HepG2 (cell line): ENCODE measurements at regions of chr11 and their contacts with region 1.

Region 1: DNA sequence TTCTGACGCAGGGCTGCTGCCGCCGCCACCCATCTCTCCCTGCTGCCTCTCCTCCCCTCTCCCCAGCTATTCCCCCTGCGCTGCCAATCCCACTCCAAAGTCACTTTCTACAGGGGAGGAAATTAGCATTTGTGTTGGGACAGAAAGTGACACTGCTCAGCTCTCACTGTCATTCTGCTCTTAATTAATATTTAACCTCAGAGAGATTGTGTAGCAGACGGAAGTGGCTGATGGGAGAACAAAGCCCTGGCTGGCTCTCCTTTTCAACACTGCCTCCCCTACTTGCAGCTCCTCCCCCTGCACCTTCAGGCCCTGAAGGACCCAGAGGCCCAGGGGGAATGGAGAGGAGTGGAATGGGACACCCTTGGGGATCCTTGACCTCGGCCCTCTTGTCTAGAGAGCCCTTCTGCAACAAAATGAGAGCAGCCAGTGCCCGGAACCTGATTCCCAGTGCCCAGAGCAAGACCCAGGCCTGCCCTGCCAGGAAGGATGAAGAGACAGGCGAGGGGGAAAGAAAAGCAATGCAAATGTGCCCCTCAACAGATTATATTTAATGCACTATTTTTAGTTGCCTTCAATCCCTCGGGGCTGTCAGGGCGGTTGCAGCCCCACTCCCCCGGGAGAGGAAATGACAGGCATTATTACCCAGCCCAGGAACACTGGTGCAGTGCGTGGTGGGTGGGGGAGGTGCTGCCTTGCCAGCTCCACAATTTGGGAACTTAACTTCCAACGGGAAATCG is 14.6 kb upstream of the NRGN start:
- DNase-seq: peak; percentile 62
- ATAC-seq: peak; percentile 94
- H3K4me3 ChIP-seq: peak overlapping the region; percentile 14 to 57 (median 18); a peak in 4 of 6 replicates
- H3K27ac ChIP-seq: no peak overlapping the region
- H3K4me1 ChIP-seq: peaks cover 22% of the 10 kb centered on the region
- H3K27me3 ChIP-seq: peaks cover 3 to 30% of the 10 kb centered on the region in 2 experiments; a peak in 4 of 5 replicates
- CTCF ChIP-seq: no peak
- EP300 ChIP-seq: no peak
- POLR2A ChIP-seq: no peak
- RAD21 ChIP-seq: no peak

Region 2: DNA sequence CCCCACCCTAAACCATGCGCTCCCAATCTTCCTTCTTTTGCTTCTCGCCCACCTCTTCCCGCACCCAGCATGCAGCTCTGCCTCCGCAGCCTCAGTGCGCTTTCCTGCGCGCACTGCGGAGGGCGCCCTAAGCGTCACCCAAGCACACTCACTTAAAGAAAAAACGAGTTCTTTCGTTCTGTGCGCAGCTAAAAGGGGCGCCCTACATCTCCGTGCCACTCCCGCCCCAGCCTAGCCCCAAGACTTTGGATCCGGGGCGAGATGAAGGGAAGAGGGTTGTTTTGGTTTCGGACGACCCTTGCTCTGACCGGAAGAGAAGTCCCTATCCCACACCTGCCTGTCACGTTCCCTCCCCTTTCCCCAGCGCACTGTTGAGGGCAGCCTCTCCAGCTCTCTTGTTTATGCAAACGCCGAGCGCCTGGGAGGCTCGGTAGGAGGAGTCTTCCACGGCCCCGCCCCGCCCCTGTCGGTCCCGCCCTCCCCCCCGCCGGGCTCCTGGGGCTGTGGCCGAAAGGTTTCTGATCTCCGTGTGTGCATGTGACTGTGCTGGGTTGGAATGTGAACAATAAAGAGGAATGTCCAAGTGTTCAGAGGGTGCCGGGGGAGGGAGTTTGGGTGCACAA is 21.6 kb after region 1 on chr11:
- CTCF ChIA-PET with region 1: no interaction called
- POLR2A ChIA-PET with region 1: interaction called, 10 read pairs
- in situ Hi-C with region 1: no loop called
- intact Hi-C with region 1: no loop called
- DNase-seq: peak; percentile 89
- ATAC-seq: peak; percentile 90
- H3K4me3 ChIP-seq: peak overlapping the region; percentile 70 to 86 (median 78)
- H3K27ac ChIP-seq: peak overlapping the region; percentile 51
- H3K4me1 ChIP-seq: peaks cover 45% of the 10 kb centered on the region
- H3K27me3 ChIP-seq: peaks cover 0 to 71% of the 10 kb centered on the region in 2 experiments; a peak in 3 of 5 replicates
- CTCF ChIP-seq: peak; percentile 81
- EP300 ChIP-seq: no peak
- POLR2A ChIP-seq: peak; percentile 55 to 69; a peak in 3 of 4 replicates
- RAD21 ChIP-seq: peak; percentile 55

Region 3: DNA sequence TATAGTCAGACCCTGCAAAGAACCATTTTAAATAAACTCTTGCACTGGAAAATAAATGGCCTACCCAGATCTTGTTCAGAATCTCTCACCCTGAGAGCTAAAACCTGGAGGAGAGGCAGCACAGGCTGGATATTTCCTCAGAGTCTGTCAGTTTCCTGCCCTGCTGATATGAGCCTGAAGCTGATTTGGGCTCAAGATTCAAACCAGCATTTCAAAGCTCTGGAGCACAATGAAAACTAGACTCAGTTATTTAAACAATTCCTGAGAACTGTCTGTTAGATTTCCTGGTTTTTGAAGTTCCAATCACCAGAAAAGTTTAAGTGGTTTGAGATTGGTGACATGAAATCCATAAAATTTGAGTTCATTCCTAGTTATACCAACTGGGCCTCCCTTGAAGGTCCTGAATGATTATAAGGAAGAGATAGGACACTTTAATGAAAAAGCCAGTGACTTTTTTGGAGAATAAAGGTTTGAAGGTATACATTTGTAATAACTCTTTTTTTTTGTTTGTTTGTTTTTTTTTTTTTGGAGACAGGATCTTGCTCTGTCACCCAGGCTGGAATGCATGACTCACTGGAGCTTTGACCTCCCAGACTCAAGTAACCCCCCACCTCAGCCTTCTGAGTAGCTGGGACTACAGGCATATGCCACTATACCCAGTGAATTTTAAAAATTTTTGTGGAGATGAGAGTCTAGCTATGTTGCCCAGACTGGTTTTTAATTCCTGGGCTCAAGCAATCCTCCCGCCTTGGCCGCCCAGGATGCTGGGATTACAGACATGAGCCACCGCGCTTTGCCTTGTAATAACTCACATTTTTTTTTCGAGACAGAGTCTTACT is 44.9 kb after region 1 on chr11:
- CTCF ChIA-PET with region 1: no interaction called
- POLR2A ChIA-PET with region 1: no interaction called
- in situ Hi-C with region 1: no loop called
- intact Hi-C with region 1: no loop called
- DNase-seq: peak; percentile 51
- ATAC-seq: peak; percentile 35; the same call in 1 of the 3 replicates
- H3K4me3 ChIP-seq: no peak overlapping the region
- H3K27ac ChIP-seq: no peak overlapping the region
- H3K4me1 ChIP-seq: peaks cover 48% of the 10 kb centered on the region
- H3K27me3 ChIP-seq: no peaks in the 10 kb centered on the region
- CTCF ChIP-seq: no peak
- EP300 ChIP-seq: no peak
- POLR2A ChIP-seq: no peak
- RAD21 ChIP-seq: no peak